ENCODE measurements at regions of chr5 and their contacts with region 1.

Region 1: DNA sequence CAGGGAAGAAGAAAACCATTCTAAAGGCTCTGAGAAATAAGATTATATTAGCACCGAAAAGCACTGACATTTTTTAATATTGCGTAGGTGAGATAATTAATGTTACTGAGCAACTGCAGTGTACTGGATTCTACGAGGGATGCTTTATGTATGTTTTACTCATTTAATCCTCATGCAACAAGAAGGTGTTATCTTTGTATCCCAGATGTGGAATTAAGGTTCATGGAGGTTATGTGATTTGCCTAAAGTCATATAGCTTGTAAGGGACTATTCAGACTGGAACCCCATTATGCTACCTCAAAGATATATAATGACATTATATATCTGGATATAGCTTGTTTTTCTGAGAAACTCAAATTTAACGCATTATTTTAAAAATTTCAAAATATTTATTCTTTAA is 2.5 kb downstream of the FBXO4 start:
- DNase-seq: no peak
- CTCF ChIP-seq: no peak

Region 2: DNA sequence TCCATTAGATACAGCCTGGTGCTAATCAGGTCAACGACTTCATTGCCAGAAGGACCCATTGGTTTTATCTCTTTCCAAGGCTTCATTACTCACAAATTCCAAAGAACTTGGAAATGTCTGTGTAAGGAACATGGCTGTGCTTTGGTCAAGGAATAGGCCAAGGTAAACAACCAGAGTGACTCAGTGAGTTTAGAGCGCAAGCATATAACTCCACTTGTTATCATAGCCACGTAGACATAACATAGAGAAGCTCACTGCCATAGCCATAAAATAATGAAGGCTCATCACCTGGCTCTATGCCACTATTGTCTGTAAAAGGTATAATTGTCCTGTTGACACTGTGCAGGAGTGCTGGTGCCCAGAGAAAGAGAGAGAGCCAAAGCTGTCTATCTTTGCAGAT is 277.9 kb before region 1 on chr5:
- CTCF ChIA-PET with region 1: no interaction called
- POLR2A ChIA-PET with region 1: no interaction called
- DNase-seq: no peak
- CTCF ChIP-seq: no peak

Region 3: DNA sequence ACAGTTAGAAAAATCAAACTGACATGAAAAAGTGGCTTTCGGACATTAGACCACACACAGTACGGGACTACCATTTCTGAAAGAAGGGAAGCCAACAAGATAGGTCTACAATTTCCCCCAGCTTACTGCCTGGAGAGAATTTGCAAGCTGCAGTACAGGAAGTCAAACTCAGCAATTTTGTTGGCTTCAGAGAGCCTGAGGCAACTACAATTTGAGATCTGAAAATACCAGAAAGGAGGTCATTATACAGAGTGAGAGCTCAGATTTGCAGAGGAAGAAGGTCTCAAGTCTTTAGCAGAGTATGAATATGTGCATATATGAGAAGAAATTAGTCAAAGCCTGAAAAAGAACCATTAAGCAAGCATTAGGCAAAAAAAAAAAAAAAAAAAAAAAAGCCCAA is 140.3 kb before region 1 on chr5:
- CTCF ChIA-PET with region 1: no interaction called
- POLR2A ChIA-PET with region 1: no interaction called
- DNase-seq: no peak
- CTCF ChIP-seq: no peak

Region 4: GRCh38 chr5:41940641-41941040 is 13.0 kb after region 1 on chr5:
- CTCF ChIA-PET with region 1: interaction called, 17 read pairs
- POLR2A ChIA-PET with region 1: no interaction called
- DNase-seq: no peak
- CTCF ChIP-seq: no peak

Region 5: DNA sequence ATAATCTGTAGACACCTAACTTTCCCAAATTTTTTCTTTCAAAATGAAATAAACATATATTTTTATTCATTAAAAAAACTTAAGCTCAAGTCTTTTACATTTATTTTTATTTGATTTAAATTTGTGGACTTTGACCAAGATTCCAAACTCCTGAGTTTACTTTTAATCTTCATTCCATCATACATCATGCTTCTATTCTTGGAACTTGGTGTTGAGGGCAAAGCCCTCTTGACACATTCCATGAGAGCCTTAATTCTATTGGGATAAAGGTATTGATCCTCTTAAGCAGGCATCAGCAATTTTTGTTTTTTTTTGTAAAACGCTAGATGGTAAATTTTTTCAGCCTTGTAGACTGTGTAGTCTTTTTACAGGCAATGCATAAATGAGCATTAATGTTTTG is 51.1 kb after region 1 on chr5:
- CTCF ChIA-PET with region 1: no interaction called
- POLR2A ChIA-PET with region 1: no interaction called
- DNase-seq: no peak
- CTCF ChIP-seq: no peak

Region 6: GRCh38 chr5:42089705-42090104 is 162.1 kb after region 1 on chr5:
- CTCF ChIA-PET with region 1: no interaction called
- POLR2A ChIA-PET with region 1: no interaction called
- DNase-seq: no peak
- CTCF ChIP-seq: no peak